ENCODE measurements at regions of chr4 and their contacts with region 1.

Region 1: DNA sequence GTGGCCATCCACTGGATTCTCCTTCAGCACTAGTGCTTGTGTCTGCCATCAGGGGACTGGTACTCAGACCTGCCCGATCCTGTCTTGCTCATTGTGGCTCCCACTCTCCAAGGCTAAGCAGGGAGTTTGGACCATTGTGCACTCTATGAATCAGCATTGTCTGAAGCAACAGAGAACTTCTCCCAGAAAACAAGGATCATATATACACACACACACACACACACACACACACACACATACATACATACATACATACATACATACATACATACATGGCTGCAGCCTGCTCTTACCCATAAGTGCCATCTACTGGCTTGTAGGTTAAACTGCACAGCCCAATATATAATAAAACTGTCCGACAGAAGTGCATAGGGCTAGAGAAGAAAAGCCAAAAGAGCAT is 345.3 kb upstream of the LCORL start:
- DNase-seq: peak in 2 of 9 experiments; percentile 17 to 49
- ATAC-seq: no peak
- H3K4me3 ChIP-seq: no peak overlapping the region
- H3K4me3 Mint-ChIP-seq: no peak overlapping the region
- H3K27ac ChIP-seq: no peak overlapping the region
- H3K27ac Mint-ChIP-seq: no peak overlapping the region
- H3K4me1 ChIP-seq: no peaks in the 10 kb centered on the region
- H3K4me1 Mint-ChIP-seq: no peaks in the 10 kb centered on the region
- H3K27me3 ChIP-seq: peaks cover 0 to 2% of the 10 kb centered on the region in 2 experiments
- H3K27me3 Mint-ChIP-seq: peaks cover 13% of the 10 kb centered on the region
- CTCF ChIP-seq: peak; percentile 17

Region 2: DNA sequence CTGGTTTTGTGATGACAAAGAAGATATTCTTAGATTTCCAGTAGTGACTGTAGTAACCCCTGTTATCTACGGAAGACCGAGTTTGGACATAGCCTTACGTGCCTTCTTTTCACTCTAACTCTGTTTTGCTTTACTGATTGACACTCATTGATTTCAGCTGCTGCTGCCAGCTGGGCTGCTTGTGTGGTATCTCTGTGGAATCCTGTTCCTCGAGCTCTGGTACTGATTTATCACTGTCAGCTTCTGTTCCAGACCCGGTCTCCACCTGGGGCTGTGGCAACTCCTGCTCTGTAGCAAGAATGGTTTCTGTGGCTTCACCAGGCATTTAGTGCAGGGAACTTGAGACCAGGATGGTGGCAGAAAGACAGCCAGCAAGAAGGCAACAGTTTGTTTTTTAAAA is 814.5 kb before region 1 on chr4:
- CTCF ChIA-PET with region 1: no interaction called
- POLR2A ChIA-PET with region 1: no interaction called
- intact Hi-C with region 1: loop called in 1 of 2 experiments (anchors 10 kb)
- DNase-seq: no peak
- ATAC-seq: no peak
- H3K4me3 ChIP-seq: no peak overlapping the region
- H3K4me3 Mint-ChIP-seq: no peak overlapping the region
- H3K27ac ChIP-seq: no peak overlapping the region
- H3K27ac Mint-ChIP-seq: no peak overlapping the region
- H3K4me1 ChIP-seq: no peaks in the 10 kb centered on the region
- H3K4me1 Mint-ChIP-seq: peaks cover 3% of the 10 kb centered on the region
- H3K27me3 ChIP-seq: no peaks in the 10 kb centered on the region
- H3K27me3 Mint-ChIP-seq: peaks cover 5% of the 10 kb centered on the region
- CTCF ChIP-seq: no peak

Region 3: DNA sequence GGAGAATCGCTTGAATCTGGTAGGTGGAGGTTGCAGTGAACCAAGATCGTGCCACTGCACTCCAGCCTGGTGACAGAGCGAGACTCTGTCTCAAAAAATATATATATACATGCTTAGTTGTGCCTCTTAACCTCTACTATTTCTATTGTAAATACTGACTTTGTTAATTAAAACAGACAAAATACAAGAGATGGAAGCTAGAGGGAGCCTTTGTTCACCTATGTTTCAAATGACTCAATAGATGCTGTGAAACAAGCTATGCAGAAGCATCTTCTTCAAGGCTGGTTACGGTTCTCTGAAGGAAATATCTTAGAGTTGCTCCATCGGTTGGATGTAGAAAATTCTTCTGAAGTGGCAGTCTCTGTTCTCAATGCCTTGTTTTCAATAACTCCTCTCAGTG is 549.9 kb before region 1 on chr4:
- CTCF ChIA-PET with region 1: interaction called, 9 read pairs
- POLR2A ChIA-PET with region 1: no interaction called
- intact Hi-C with region 1: loop called (anchors 2 kb)
- DNase-seq: peak in 2 of 9 experiments; percentile 57 to 69
- ATAC-seq: peak; percentile 77
- H3K4me3 ChIP-seq: no peak overlapping the region
- H3K4me3 Mint-ChIP-seq: no peak overlapping the region
- H3K27ac ChIP-seq: no peak overlapping the region
- H3K27ac Mint-ChIP-seq: no peak overlapping the region
- H3K4me1 ChIP-seq: no peaks in the 10 kb centered on the region
- H3K4me1 Mint-ChIP-seq: peaks cover 6% of the 10 kb centered on the region
- H3K27me3 ChIP-seq: no peaks in the 10 kb centered on the region
- H3K27me3 Mint-ChIP-seq: no peaks in the 10 kb centered on the region
- CTCF ChIP-seq: peak; percentile 56

Measured in CD8-positive, alpha-beta T cell (primary cell).